Activated T-helper 1 cell treated with anti-CD3 and anti-CD28 coated beads, Interleukin-12 subunit alpha, Interleukin-12 subunit beta, Interleukin-2, Interleukin-4 antibody, amounts not matched to agents 30 ng/mL and 10 ng/mL and 1 ng/mL, durations not matched to agents 14 hours and 24 hours and 36 hours (primary cell): ENCODE measurements at regions of chr6 and their contacts with region 1.

Region 1: GRCh38 chr6:79570129-79571029 is 33.1 kb upstream of the LCA5 start:
- DNase-seq: no peak
- H3K4me3 Mint-ChIP-seq: no peak overlapping the region
- H3K27ac Mint-ChIP-seq: no peak overlapping the region
- H3K4me1 Mint-ChIP-seq: no peaks in the 10 kb centered on the region
- H3K27me3 Mint-ChIP-seq: peaks cover 6% of the 10 kb centered on the region

Region 2: DNA sequence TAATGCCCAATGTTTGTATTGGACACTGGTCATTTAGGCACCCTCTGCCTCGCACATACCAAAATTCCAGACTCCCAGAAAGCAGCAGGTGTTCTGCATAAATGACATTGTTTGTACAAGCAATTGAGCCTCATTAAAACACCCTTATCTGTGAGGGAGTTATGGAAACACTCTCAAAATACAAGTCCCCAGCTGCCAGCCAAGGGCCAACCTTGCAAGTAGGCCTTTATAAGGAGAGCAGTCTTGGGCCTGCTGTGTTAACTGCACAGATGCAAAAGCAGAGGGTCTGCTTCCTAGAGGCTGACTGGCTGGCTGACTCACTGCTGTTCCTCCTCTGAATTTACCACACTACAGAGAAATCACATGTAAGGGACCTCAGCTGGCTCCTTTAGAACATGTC is 185.5 kb before region 1 on chr6:
- intact Hi-C with region 1: no loop called
- DNase-seq: no peak
- H3K4me3 Mint-ChIP-seq: no peak overlapping the region
- H3K27ac Mint-ChIP-seq: no peak overlapping the region
- H3K4me1 Mint-ChIP-seq: no peaks in the 10 kb centered on the region
- H3K27me3 Mint-ChIP-seq: no peaks in the 10 kb centered on the region

Region 3: DNA sequence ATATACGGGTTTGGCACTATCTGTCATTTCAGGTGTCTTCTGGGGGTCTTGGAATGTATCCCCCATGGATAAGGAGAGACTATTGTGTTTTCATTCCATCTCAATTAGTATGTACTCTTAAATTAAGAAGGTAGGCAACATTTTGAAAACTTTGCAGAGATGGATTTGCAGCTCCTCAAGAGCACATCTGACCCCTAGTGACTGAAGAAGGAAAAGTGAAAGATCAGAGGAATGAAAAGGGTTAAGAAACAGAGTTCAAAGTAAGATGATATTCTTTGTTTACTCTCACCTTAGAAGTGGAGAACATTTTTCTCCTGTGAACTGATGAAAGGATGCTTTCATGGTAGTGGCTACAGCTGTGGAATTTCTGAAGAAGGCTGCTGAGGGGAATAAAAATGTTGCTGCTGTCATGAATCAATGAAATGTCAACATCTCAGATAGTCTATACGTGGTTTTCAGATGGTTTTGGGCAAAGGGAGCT is 102.3 kb after region 1 on chr6:
- intact Hi-C with region 1: loop called (anchors 2 kb)
- DNase-seq: no peak
- H3K4me3 Mint-ChIP-seq: no peak overlapping the region
- H3K27ac Mint-ChIP-seq: no peak overlapping the region
- H3K4me1 Mint-ChIP-seq: peaks cover 23% of the 10 kb centered on the region
- H3K27me3 Mint-ChIP-seq: peaks cover 2% of the 10 kb centered on the region

Region 4: GRCh38 chr6:79713701-79714322 is 143.4 kb after region 1 on chr6:
- intact Hi-C with region 1: loop called (anchors 1 kb)
- DNase-seq: no peak
- H3K4me3 Mint-ChIP-seq: no peak overlapping the region
- H3K27ac Mint-ChIP-seq: no peak overlapping the region
- H3K4me1 Mint-ChIP-seq: no peaks in the 10 kb centered on the region
- H3K27me3 Mint-ChIP-seq: peaks cover 5% of the 10 kb centered on the region

Region 5: GRCh38 chr6:79813854-79814709 is 243.7 kb after region 1 on chr6:
- intact Hi-C with region 1: loop called (anchors 1 kb)
- DNase-seq: peak; percentile 37
- H3K4me3 Mint-ChIP-seq: no peak overlapping the region
- H3K27ac Mint-ChIP-seq: no peak overlapping the region
- H3K4me1 Mint-ChIP-seq: no peaks in the 10 kb centered on the region
- H3K27me3 Mint-ChIP-seq: peaks cover 8% of the 10 kb centered on the region

Region 6: DNA sequence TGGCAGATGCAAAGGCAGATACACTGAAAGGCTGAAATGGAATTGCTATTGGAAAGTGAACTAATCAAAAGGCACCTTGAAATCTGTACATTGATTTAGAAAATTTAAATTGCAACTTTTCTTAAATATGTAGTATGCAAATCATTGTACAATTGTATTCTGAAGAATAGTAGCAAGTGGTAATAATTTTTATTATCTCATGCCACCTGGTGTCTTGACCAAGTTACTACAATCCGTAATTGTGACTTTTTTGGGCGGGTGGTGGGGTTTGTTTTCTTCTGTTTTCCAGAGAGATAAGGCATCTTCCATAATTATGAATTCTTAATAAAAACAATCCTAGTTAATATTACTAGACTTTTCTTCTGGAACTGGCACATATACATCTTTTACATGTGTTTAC is 523.6 kb after region 1 on chr6:
- intact Hi-C with region 1: loop called (anchors 5 kb)
- DNase-seq: no peak
- H3K4me3 Mint-ChIP-seq: no peak overlapping the region
- H3K27ac Mint-ChIP-seq: no peak overlapping the region
- H3K4me1 Mint-ChIP-seq: peaks cover 9% of the 10 kb centered on the region
- H3K27me3 Mint-ChIP-seq: peaks cover 12% of the 10 kb centered on the region